Activated T-helper 1 cell treated with anti-CD3 and anti-CD28 coated beads, Interleukin-12 subunit alpha, Interleukin-12 subunit beta, Interleukin-2, Interleukin-4 antibody, amounts not matched to agents 30 ng/mL and 10 ng/mL and 1 ng/mL, durations not matched to agents 14 hours and 24 hours and 36 hours (primary cell): ENCODE measurements at regions of chr5 and their contacts with region 1.

Region 1: GRCh38 chr5:134845852-134846640 is at the start of gene C5orf24:
- DNase-seq: peak; percentile 90
- H3K4me3 Mint-ChIP-seq: peak within 1 kb of the TSS; percentile 97
- H3K27ac Mint-ChIP-seq: peak within 1 kb of the TSS; percentile 97
- H3K4me1 Mint-ChIP-seq: peaks cover 25% of the 10 kb centered on the region
- H3K27me3 Mint-ChIP-seq: no peaks in the 10 kb centered on the region
- total RNA-seq, gene C5orf24: 42.2 and 43.2 TPM in 2 replicates

Region 2: GRCh38 chr5:134176511-134177368 is 669.3 kb before region 1 on chr5 and contains the start of gene SKP1:
- intact Hi-C with region 1: loop called (anchors 2 kb)
- DNase-seq: peak; percentile 85
- H3K4me3 Mint-ChIP-seq: peak within 1 kb of the TSS; percentile 96
- H3K27ac Mint-ChIP-seq: peak within 1 kb of the TSS; percentile 97
- H3K4me1 Mint-ChIP-seq: peaks cover 28% of the 10 kb centered on the region
- H3K27me3 Mint-ChIP-seq: peaks cover 6% of the 10 kb centered on the region
- total RNA-seq, gene SKP1: 259 and 265 TPM in 2 replicates

Region 3: GRCh38 chr5:134758504-134759341 is 87.3 kb before region 1 on chr5 and contains the start of gene DDX46:
- intact Hi-C with region 1: loop called (anchors 1 kb)
- DNase-seq: peak; percentile 94
- H3K4me3 Mint-ChIP-seq: peak within 1 kb of the TSS; percentile 100
- H3K27ac Mint-ChIP-seq: peak within 1 kb of the TSS; percentile 99
- H3K4me1 Mint-ChIP-seq: peaks cover 28% of the 10 kb centered on the region
- H3K27me3 Mint-ChIP-seq: no peaks in the 10 kb centered on the region
- total RNA-seq, gene DDX46: 78.3 and 84.4 TPM in 2 replicates

Region 4: GRCh38 chr5:134813407-134813806 is 32.6 kb before region 1 on chr5:
- intact Hi-C with region 1: loop called (anchors 1 kb)
- DNase-seq: peak; percentile 29
- H3K4me3 Mint-ChIP-seq: no peak overlapping the region
- H3K27ac Mint-ChIP-seq: peak overlapping the region; percentile 77
- H3K4me1 Mint-ChIP-seq: peaks cover 9% of the 10 kb centered on the region
- H3K27me3 Mint-ChIP-seq: no peaks in the 10 kb centered on the region

Region 5: DNA sequence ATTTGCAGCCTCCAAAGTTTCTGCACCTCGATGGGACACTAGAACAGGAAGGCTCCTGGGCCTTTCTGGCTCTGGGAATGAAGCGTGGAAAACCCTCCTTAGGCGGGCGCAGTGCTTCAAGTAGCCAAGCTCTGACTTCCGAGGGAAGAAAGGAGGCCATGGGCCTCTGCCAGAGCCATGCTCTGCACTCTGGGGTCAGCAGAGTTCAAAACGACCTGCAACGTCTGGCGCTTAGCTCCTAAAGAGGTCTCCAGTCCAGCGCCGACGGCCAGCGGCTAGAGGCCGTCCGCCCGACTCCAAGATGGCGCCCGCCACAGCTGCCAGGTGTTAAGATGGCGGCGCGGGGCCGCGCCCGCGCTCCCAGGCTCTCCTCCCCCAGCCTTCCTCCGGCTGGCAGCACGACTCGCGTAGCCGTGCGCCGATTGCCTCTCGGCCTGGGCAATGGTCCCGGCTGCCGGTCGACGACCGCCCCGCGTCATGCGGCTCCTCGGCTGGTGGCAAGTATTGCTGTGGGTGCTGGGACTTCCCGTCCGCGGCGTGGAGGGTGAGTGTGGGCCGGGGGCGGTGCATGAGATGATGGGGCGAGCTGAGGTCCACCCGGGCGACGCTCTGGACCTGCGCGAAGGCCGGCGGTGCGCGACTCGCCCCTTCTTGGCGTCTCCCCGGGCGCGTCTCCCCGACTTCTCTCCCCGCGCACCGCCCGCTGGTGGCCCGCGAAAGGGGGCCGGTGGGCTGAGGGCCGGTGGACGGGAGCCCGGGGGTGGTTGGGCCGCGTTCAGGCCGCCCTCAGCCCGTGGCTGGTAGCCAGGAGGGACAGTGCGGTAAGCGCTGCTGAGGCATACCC is 28.2 kb after region 1 on chr5 and contains the start of gene TXNDC15:
- intact Hi-C with region 1: loop called (anchors 1 kb)
- DNase-seq: peak; percentile 82
- H3K4me3 Mint-ChIP-seq: peak within 1 kb of the TSS; percentile 100
- H3K27ac Mint-ChIP-seq: peak within 1 kb of the TSS; percentile 98
- H3K4me1 Mint-ChIP-seq: peaks cover 43% of the 10 kb centered on the region
- H3K27me3 Mint-ChIP-seq: no peaks in the 10 kb centered on the region
- total RNA-seq, gene TXNDC15: 57.1 and 67.2 TPM in 2 replicates

Region 6: GRCh38 chr5:134904630-134905245 is 58.7 kb after region 1 on chr5 and contains the start of gene PCBD2:
- intact Hi-C with region 1: loop called (anchors 1 kb)
- DNase-seq: peak; percentile 91
- H3K4me3 Mint-ChIP-seq: peak within 1 kb of the TSS; percentile 94
- H3K27ac Mint-ChIP-seq: peak within 1 kb of the TSS; percentile 99
- H3K4me1 Mint-ChIP-seq: peaks cover 15% of the 10 kb centered on the region
- H3K27me3 Mint-ChIP-seq: no peaks in the 10 kb centered on the region
- total RNA-seq, gene PCBD2: 13.5 and 17.2 TPM in 2 replicates

Region 7: DNA sequence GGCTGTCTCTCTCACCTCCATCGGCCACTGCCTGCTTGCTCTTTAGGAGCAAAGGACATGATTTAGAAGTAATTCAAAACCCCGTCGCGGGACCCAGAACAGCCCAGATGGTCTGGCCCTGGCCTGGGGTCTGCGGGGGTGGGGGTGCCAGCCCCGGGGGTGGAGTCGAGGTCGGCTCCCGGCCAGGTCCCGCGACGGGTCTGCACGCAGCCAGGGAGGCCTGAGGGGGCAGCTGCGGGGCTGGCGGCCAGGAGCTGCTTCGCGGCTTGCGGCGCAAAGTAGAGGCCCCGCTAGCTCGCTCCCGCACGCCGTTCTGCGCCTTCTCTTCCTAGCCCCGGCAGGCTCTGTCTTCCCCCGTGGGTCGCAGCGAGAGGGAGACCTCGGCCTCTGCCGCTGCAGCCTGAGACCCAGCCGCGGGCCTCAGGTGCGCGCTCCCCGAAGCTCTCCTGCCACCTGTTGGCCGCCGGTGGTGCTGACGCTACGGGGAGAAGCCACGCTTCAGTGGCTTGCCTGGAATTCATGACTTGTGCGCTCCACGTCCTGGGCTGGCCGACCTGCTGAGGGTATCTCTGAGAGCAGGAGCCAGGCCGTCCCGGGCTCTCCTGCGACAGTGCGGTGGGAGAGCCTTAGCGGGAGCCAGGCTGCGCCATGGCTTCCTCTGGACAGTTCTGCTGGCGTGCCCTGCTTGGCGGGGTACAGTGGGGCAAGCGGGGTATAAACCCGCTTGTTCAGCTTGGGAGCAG is 345.2 kb after region 1 on chr5:
- intact Hi-C with region 1: loop called (anchors 2 kb)
- DNase-seq: peak; percentile 63
- H3K4me3 Mint-ChIP-seq: peak overlapping the region; percentile 59
- H3K27ac Mint-ChIP-seq: no peak overlapping the region
- H3K4me1 Mint-ChIP-seq: no peaks in the 10 kb centered on the region
- H3K27me3 Mint-ChIP-seq: peaks cover 43% of the 10 kb centered on the region